ENCODE measurements at regions of chr12 and their contacts with region 1.

Region 1: GRCh38 chr12:108798551-108799221 is 58.7 kb downstream of the SSH1 start:
- DNase-seq: no peak
- ATAC-seq: no peak
- H3K4me3 ChIP-seq: no peak overlapping the region
- H3K27ac ChIP-seq: no peak overlapping the region
- H3K4me1 ChIP-seq: peaks cover 11% of the 10 kb centered on the region
- H3K27me3 ChIP-seq: no peaks in the 10 kb centered on the region
- CTCF ChIP-seq: no peak
- POLR2A ChIP-seq: no peak

Region 2: GRCh38 chr12:108664338-108665258 is 134.1 kb before region 1 on chr12:
- intact Hi-C with region 1: loop called (anchors 5 kb)
- DNase-seq: peak; percentile 82 to 90 (median 84)
- ATAC-seq: peak; percentile 98
- H3K4me3 ChIP-seq: no peak overlapping the region
- H3K27ac ChIP-seq: peak overlapping the region in 2 of 4 donors; percentile 66 to 75
- H3K4me1 ChIP-seq: peaks cover 9% of the 10 kb centered on the region
- H3K27me3 ChIP-seq: no peaks in the 10 kb centered on the region
- CTCF ChIP-seq: peak; percentile 76 to 97 (median 94)
- POLR2A ChIP-seq: no peak